ENCODE measurements at regions of chr14 and their contacts with region 1.

Region 1: GRCh38 chr14:69247676-69248440 is 12.1 kb upstream of the GALNT16 start:
- DNase-seq: no peak
- ATAC-seq: no peak
- H3K4me3 Mint-ChIP-seq: no peak overlapping the region
- H3K27ac Mint-ChIP-seq: no peak overlapping the region
- H3K4me1 Mint-ChIP-seq: no peaks in the 10 kb centered on the region
- H3K27me3 Mint-ChIP-seq: no peaks in the 10 kb centered on the region
- CTCF ChIP-seq: no peak

Region 2: GRCh38 chr14:69107407-69108003 is 140.4 kb before region 1 on chr14:
- CTCF ChIA-PET with region 1: no interaction called
- POLR2A ChIA-PET with region 1: no interaction called
- DNase-seq: peak; percentile 18
- ATAC-seq: peak; percentile 98
- H3K4me3 Mint-ChIP-seq: no peak overlapping the region
- H3K27ac Mint-ChIP-seq: peak overlapping the region; percentile 50; the same call in 1 of the 2 replicates
- H3K4me1 Mint-ChIP-seq: peaks cover 4% of the 10 kb centered on the region
- H3K27me3 Mint-ChIP-seq: no peaks in the 10 kb centered on the region
- CTCF ChIP-seq: peak; percentile 57; the same call in 1 of the 2 replicates

Region 3: GRCh38 chr14:69260861-69261564 is 13.2 kb after region 1 on chr14:
- CTCF ChIA-PET with region 1: interaction called, 11 read pairs
- POLR2A ChIA-PET with region 1: interaction called, 5 read pairs
- DNase-seq: peak; percentile 73
- ATAC-seq: peak; percentile 43
- H3K4me3 Mint-ChIP-seq: peak overlapping the region; percentile 79
- H3K27ac Mint-ChIP-seq: no peak overlapping the region
- H3K4me1 Mint-ChIP-seq: peaks cover 21% of the 10 kb centered on the region
- H3K27me3 Mint-ChIP-seq: peaks cover 57% of the 10 kb centered on the region
- CTCF ChIP-seq: peak; percentile 82

Region 4: GRCh38 chr14:69317104-69317755 is 69.4 kb after region 1 on chr14:
- CTCF ChIA-PET with region 1: no interaction called
- POLR2A ChIA-PET with region 1: no interaction called
- DNase-seq: peak; percentile 1
- ATAC-seq: no peak
- H3K4me3 Mint-ChIP-seq: no peak overlapping the region
- H3K27ac Mint-ChIP-seq: no peak overlapping the region
- H3K4me1 Mint-ChIP-seq: peaks cover 8% of the 10 kb centered on the region
- H3K27me3 Mint-ChIP-seq: no peaks in the 10 kb centered on the region
- CTCF ChIP-seq: no peak

Region 5: DNA sequence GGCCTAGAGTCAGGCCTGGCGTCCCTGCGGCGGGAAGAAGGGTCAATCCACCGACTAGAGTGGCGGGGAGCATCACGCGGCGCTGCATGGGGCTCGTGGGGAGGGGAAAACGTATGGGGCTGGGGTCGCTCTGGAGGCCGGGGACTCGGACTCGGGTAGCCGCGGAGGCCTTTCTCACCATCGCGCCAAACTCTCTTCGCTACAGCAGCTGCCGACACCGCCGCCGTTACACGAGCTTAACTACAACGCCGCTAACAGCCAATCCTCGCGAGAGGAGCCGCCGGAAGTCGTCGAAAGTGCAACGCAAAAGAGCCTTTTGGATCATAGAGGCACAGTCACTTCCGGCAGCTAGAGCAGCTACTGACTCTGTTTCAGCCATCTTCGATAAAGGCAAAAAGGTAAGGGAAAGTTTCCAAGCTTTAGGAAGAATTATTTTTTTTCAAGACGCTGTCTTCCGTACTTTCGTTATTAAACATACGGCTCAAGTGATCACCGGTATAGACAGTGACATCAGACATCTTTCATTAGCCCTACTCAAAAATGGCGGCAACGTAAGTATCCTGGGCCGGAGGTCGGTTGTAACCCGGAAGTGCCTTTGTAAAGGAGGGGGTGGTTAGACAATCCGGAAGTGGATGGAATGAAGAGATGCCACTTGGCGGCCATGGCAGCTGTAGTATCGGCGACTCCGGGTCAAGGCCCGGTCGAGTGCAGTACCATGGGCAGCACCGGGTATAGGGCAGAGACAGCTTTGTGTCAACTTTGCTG is 150.4 kb after region 1 on chr14 and contains the starts of genes ERH and SLC39A9:
- CTCF ChIA-PET with region 1: no interaction called
- POLR2A ChIA-PET with region 1: no interaction called
- DNase-seq: peak; percentile 93
- ATAC-seq: peak; percentile 91
- H3K4me3 Mint-ChIP-seq: peak within 1 kb of the TSS; percentile 94
- H3K27ac Mint-ChIP-seq: peak within 1 kb of the TSS; percentile 100
- H3K4me1 Mint-ChIP-seq: peaks cover 33% of the 10 kb centered on the region
- H3K27me3 Mint-ChIP-seq: no peaks in the 10 kb centered on the region
- CTCF ChIP-seq: no peak
- total RNA-seq, gene ERH: 320 to 363 TPM (median 356 TPM) in 3 replicates
- total RNA-seq, gene SLC39A9: 39.2 to 44.1 TPM (median 42.6 TPM) in 3 replicates